Activated naive CD4-positive, alpha-beta T cell treated with anti-CD3 and anti-CD28 coated beads for 36 hours (primary cell): ENCODE measurements at regions of chr2 and their contacts with region 1.

Region 1: DNA sequence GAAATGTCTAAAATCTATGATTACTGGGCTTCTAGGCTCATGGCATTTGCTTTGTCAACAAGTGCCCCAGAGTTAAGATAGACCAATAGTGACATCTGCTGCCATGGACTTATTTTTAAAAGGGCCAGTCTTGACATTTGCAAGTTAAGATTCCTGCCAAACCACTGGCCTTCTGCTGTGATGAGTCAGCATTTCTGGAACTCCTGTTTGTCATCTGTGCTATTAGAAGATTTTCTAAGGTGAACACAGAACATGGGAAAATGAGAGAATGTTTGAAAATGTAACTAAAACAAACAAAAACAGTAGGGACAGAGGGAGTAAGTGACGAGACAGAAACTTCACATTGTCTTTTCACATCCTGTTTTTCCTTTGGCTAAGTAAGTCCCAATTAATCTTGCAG is 93.7 kb upstream of the WDR75 start:
- DNase-seq: peak; percentile 28
- H3K4me3 Mint-ChIP-seq: no peak overlapping the region
- H3K27ac Mint-ChIP-seq: no peak overlapping the region
- H3K4me1 Mint-ChIP-seq: peaks cover 17% of the 10 kb centered on the region
- H3K27me3 Mint-ChIP-seq: no peaks in the 10 kb centered on the region

Region 2: DNA sequence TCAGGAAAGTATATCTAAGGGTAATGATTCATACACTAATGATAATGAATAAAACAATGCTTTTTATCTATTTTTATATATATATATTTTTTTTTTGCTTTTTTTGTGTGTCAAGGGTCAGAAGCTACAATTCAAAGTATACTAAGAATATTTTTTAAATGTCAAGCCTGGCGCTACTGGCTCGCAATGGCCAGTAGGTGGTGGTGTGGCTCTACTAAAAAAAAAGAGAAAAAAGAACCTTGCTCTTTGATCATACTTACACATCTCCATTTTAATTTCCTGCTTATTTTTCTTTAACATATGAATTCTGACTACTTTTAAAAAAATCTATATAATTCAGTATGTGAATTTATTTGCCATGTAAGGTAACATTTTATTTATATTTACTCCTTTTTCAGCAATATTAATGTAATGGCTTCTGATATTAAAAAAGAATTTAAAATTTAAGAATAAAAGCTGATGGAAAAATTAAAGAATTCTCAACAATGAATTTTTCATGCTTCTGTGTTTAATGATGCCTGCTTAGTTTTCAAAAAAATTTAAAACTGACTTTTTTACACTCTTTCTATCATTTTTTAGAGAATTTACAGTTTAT is 822.9 kb before region 1 on chr2:
- CTCF ChIA-PET with region 1: interaction called, 10 read pairs
- intact Hi-C with region 1: loop called (anchors 1 kb)
- DNase-seq: peak; percentile 35
- H3K4me3 Mint-ChIP-seq: no peak overlapping the region
- H3K27ac Mint-ChIP-seq: no peak overlapping the region
- H3K4me1 Mint-ChIP-seq: no peaks in the 10 kb centered on the region
- H3K27me3 Mint-ChIP-seq: peaks cover 2% of the 10 kb centered on the region

Region 3: DNA sequence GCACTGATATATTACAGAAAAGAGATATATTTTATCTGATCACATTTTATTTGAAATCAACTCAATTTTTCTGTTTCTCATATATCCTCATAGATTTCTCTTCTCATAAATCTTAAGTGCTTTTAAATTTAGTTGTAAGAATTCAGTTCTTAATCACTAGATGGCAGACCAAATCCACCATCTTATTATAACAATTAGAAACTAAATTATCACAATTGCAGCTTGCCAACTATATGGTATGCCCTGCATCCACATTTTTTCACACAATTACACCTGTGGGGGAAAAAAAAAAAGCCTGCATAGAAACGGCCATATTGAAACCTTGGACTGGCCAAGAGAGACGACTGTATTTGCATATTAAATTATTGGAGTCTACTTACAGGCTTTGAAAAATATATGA is 232.4 kb before region 1 on chr2:
- CTCF ChIA-PET with region 1: interaction called, 3 read pairs
- intact Hi-C with region 1: loop called (anchors 1 kb)
- DNase-seq: no peak
- H3K4me3 Mint-ChIP-seq: no peak overlapping the region
- H3K27ac Mint-ChIP-seq: no peak overlapping the region
- H3K4me1 Mint-ChIP-seq: peaks cover 22% of the 10 kb centered on the region
- H3K27me3 Mint-ChIP-seq: no peaks in the 10 kb centered on the region

Region 4: DNA sequence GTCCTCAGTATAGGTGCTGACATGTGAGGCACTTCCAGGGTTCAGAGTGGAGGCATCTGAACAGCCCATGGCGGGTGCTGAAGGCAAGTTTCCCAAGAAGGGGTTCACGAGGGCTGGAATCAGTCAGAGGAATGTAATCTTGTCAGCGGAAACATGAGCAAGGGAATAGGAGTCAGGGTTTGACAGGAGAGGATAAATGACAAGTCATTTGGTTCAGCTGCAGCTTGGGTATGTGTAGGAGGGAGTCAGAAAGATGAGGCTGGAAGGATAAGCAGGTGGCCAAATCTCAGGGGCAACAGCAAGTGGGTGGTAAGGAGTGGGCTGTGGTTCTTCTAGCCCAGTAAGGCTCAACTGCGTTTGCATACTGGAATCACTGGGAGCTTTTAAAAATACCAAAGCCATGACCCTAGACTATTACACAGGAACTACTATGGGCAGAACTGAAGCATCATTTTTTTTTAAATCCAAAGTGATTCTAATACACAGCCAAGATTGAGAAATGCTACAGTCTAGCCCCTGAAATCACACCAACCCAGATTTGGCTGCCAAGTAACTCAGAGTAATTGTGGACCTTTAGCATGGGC is 1259.6 kb after region 1 on chr2:
- CTCF ChIA-PET with region 1: no interaction called
- intact Hi-C with region 1: no loop called
- DNase-seq: no peak
- H3K4me3 Mint-ChIP-seq: no peak overlapping the region
- H3K27ac Mint-ChIP-seq: no peak overlapping the region
- H3K4me1 Mint-ChIP-seq: no peaks in the 10 kb centered on the region
- H3K27me3 Mint-ChIP-seq: no peaks in the 10 kb centered on the region